ENCODE measurements at regions of chr3 and their contacts with region 1.

Region 1: GRCh38 chr3:184561061-184561912 is at the start of gene EPHB3:
- DNase-seq: peak; percentile 98
- H3K4me3 Mint-ChIP-seq: peak within 1 kb of the TSS; percentile 62
- H3K27ac Mint-ChIP-seq: no peak within 1 kb of the TSS
- H3K4me1 Mint-ChIP-seq: peaks cover 35% of the 10 kb centered on the region
- H3K27me3 Mint-ChIP-seq: peaks cover 33% of the 10 kb centered on the region
- total RNA-seq, gene EPHB3: not detected

Region 2: DNA sequence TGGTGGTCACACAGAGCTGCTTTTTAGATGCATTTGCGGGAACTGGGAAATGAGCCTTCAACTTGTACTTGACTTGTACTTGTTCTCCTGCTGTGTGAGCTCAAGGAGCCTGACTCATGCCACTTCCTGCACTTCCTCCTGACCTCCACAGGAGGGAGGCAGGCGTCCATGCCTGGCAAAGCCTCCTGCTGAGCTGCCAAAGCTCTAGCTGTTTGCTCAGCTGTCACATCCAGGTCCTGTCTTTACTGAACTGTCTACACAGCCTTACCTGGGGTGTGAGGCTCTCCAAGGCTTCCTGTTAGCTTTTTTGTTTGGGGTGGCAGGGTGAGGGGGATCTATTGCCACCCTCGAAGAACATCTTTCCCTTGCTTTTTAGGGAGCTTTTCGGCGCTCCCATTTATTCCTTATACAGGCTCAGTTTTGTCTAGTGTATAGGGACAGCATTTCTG is 189.7 kb before region 1 on chr3:
- CTCF ChIA-PET with region 1: interaction called, 10 read pairs
- intact Hi-C with region 1: no loop called
- DNase-seq: peak; percentile 80
- H3K4me3 Mint-ChIP-seq: no peak overlapping the region
- H3K27ac Mint-ChIP-seq: no peak overlapping the region
- H3K4me1 Mint-ChIP-seq: peaks cover 16% of the 10 kb centered on the region
- H3K27me3 Mint-ChIP-seq: no peaks in the 10 kb centered on the region

Region 3: DNA sequence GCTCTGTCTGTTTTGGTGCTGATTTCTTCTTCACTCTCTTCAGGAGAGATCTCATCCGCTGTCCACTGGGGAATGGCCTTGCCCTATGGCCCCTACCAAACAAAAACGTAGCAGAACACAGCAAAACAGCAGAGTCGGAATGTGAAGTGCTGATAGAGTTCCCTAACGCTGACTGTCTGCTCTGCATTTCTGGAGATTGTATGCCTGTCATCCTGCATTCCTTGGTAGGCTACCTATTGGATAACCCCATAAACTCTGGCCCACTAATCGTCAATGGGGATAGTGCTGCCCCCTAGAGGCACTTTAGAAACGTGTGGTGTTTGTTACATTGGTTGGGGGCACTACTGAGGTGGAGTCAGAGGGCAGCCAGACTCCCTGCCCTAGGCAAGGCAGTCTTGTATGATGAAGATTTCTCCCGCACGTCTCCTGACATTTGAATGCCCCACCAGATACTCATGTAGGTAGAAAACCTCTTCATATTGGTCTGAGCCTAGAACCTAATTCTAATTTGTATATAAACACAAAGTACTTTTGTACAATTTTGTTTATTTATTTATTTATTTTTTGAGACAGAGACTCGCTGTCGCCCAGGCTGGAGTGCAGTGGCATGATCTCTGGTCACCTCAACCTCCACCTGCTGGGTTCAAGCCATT is 166.2 kb after region 1 on chr3:
- CTCF ChIA-PET with region 1: interaction called, 5 read pairs
- intact Hi-C with region 1: loop called (anchors 1 kb)
- DNase-seq: peak; percentile 70
- H3K4me3 Mint-ChIP-seq: no peak overlapping the region
- H3K27ac Mint-ChIP-seq: peak overlapping the region; percentile 2
- H3K4me1 Mint-ChIP-seq: no peaks in the 10 kb centered on the region
- H3K27me3 Mint-ChIP-seq: no peaks in the 10 kb centered on the region

Region 4: GRCh38 chr3:184777336-184778004 is 216.2 kb after region 1 on chr3:
- CTCF ChIA-PET with region 1: interaction called, 14 read pairs
- intact Hi-C with region 1: loop called (anchors 1 kb)
- DNase-seq: peak; percentile 94
- H3K4me3 Mint-ChIP-seq: no peak overlapping the region
- H3K27ac Mint-ChIP-seq: no peak overlapping the region
- H3K4me1 Mint-ChIP-seq: no peaks in the 10 kb centered on the region
- H3K27me3 Mint-ChIP-seq: peaks cover 7% of the 10 kb centered on the region

Region 5: DNA sequence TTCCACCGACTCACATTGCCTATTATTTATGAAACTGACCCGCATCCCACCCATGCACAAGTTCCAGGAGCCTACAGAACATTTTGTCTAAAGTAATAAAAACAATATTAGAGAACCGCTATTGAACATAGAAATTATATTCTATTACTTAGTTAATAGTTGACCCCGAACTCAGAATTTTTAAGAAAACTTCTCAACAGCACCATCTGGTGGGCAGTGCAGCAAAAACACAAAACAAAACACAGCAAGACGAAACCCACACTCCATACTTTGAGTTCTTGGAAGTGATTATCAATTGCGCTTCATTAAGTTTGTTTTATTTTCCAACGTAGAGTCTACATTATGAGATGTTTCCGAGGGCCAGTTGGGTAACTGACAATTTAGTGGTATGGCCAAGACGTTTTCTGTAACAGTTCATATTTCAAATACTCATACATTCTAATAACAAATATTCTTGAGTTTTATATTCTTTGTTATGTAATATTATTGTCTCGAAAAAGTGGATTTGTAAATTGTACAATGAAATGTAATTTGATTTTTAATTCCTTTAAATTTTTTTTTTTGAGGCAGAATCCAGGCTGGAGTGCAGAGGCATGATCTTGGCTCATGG is 615.6 kb after region 1 on chr3:
- CTCF ChIA-PET with region 1: interaction called, 6 read pairs
- intact Hi-C with region 1: loop called (anchors 1 kb)
- DNase-seq: peak; percentile 58
- H3K4me3 Mint-ChIP-seq: no peak overlapping the region
- H3K27ac Mint-ChIP-seq: no peak overlapping the region
- H3K4me1 Mint-ChIP-seq: no peaks in the 10 kb centered on the region
- H3K27me3 Mint-ChIP-seq: peaks cover 6% of the 10 kb centered on the region

Measured in activated naive CD4-positive, alpha-beta T cell treated with anti-CD3 and anti-CD28 coated beads for 36 hours (primary cell).